MCF 10A (cell line): ENCODE measurements at regions of chrX and their contacts with region 1.

Region 1: DNA sequence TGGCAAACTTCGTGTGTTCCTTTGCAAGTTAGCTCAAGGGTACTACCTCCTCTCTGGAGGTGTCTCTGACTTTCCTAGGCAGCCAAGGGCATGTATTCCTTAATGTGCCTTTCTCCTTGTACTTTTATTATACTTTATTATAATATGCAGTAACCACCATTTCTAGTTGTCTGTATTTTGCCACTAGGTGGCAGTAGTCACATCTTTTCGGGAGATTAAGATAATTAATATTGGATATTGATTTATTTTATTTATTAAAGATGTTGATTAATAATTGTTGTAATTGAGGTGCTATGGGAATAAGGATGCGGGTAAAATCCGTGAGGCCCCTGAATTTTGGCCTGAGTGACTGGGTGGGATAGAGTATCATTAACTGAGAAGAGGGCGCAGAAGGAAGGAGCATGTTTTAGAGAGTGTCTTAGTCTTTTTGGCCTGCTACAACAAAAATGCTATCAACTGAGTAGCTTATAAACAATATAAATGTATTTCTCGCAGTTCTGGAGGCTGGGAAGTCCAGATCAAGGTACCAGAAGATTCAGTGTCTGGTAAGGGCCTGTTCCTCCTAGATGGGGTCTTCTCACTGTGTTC is 153.3 kb downstream of the TMEM164 start:
- DNase-seq: peak; percentile 29
- H3K4me3 Mint-ChIP-seq: no peak overlapping the region
- H3K27ac Mint-ChIP-seq: no peak overlapping the region
- H3K4me1 Mint-ChIP-seq: peaks cover 12% of the 10 kb centered on the region
- H3K27me3 Mint-ChIP-seq: peaks cover 43% of the 10 kb centered on the region
- CTCF ChIP-seq: peak; percentile 34

Region 2: DNA sequence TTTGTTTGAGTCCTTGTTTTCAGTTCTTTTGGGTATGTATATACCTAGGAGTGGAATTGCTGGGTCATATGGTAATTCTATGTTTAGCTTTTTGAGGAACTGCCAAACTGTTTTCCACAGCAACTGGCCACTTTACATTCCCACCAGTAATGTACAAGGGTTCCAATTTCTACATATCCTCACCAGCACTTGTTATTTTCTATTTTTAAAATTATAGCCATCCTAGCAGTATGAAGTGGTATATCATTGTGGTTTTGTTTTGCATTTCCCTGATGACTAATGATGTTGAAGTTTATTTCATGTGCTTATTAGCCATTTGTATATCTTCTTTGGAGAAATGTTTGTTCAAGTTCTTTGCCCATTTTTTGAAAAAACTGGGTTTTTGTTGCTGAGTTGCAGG is 113.8 kb before region 1 on chrX:
- CTCF ChIA-PET with region 1: no interaction called
- POLR2A ChIA-PET with region 1: no interaction called
- intact Hi-C with region 1: no loop called
- DNase-seq: no peak
- H3K4me3 Mint-ChIP-seq: no peak overlapping the region
- H3K27ac Mint-ChIP-seq: no peak overlapping the region
- H3K4me1 Mint-ChIP-seq: no peaks in the 10 kb centered on the region
- H3K27me3 Mint-ChIP-seq: peaks cover 79% of the 10 kb centered on the region
- CTCF ChIP-seq: no peak

Region 3: DNA sequence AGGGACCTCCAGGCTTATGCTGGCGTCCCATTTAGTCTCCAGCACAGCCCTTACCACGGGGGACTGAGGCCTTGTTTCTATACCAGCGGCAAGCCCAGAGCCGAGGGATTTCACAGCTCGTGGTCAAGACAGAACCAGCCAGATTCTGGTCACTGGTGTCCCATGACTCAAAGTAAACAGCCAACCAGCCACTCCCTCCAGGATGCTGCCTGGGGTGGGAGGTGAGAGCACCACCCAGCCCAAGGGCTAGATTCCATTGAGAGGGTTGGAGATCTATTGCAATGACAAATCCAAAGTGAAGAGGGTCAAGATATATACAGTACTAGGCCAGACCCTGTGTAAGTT is 17.6 kb after region 1 on chrX:
- CTCF ChIA-PET with region 1: interaction called, 13 read pairs
- POLR2A ChIA-PET with region 1: interaction called, 3 read pairs
- intact Hi-C with region 1: no loop called
- DNase-seq: peak; percentile 66
- H3K4me3 Mint-ChIP-seq: peak overlapping the region; percentile 6
- H3K27ac Mint-ChIP-seq: peak overlapping the region; percentile 62
- H3K4me1 Mint-ChIP-seq: peaks cover 28% of the 10 kb centered on the region
- H3K27me3 Mint-ChIP-seq: peaks cover 39% of the 10 kb centered on the region
- CTCF ChIP-seq: no peak

Region 4: DNA sequence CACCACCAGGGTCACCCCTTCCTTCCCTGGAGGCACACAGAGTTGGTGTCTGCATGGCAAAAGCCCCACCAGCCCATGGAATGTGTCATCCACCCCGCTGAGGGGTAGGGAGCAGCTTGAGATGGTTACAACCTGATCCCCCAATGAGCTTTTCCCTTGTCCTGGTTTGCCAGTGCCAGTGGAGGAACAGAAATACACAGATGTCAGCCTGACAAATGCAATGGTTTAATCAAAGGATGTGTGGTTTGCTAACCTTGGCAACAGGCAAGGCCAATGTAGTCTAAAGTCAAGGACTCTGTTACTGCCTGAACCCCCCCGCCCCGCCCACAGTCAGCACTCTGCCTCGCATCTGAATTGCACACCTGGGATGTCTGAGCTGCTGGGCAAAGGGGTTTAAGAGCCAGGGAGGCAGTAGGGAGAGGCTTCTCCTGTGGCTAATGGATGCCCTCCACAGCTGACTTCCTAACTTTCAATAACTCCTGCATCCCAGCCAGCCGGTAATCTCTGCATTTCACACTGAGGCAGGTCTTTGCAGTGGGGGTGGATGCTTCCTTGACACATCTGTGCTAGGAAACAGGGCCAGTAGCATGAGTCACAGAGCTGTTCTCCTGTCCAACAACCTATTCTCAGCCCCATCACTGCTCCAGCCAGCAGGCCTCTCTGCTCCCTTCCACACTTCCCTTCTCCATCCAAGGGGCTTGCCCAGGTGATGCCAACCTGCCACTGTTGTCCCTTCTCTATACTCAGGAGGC is 24.1 kb after region 1 on chrX:
- CTCF ChIA-PET with region 1: interaction called, 13 read pairs
- POLR2A ChIA-PET with region 1: interaction called, 3 read pairs
- intact Hi-C with region 1: no loop called
- DNase-seq: peak; percentile 75
- H3K4me3 Mint-ChIP-seq: no peak overlapping the region
- H3K27ac Mint-ChIP-seq: peak overlapping the region; percentile 47
- H3K4me1 Mint-ChIP-seq: peaks cover 37% of the 10 kb centered on the region
- H3K27me3 Mint-ChIP-seq: peaks cover 78% of the 10 kb centered on the region
- CTCF ChIP-seq: no peak

Region 5: GRCh38 chrX:110407910-110408545 is 251.8 kb after region 1 on chrX:
- CTCF ChIA-PET with region 1: interaction called, 432 read pairs
- POLR2A ChIA-PET with region 1: interaction called, 7 read pairs
- intact Hi-C with region 1: loop called (anchors 1 kb)
- DNase-seq: peak; percentile 85
- H3K4me3 Mint-ChIP-seq: no peak overlapping the region
- H3K27ac Mint-ChIP-seq: no peak overlapping the region
- H3K4me1 Mint-ChIP-seq: peaks cover 12% of the 10 kb centered on the region
- H3K27me3 Mint-ChIP-seq: peaks cover 61% of the 10 kb centered on the region
- CTCF ChIP-seq: peak; percentile 50